IMR-90 (cell line): ENCODE measurements at regions of chr20 and their contacts with region 1.

Region 1: DNA sequence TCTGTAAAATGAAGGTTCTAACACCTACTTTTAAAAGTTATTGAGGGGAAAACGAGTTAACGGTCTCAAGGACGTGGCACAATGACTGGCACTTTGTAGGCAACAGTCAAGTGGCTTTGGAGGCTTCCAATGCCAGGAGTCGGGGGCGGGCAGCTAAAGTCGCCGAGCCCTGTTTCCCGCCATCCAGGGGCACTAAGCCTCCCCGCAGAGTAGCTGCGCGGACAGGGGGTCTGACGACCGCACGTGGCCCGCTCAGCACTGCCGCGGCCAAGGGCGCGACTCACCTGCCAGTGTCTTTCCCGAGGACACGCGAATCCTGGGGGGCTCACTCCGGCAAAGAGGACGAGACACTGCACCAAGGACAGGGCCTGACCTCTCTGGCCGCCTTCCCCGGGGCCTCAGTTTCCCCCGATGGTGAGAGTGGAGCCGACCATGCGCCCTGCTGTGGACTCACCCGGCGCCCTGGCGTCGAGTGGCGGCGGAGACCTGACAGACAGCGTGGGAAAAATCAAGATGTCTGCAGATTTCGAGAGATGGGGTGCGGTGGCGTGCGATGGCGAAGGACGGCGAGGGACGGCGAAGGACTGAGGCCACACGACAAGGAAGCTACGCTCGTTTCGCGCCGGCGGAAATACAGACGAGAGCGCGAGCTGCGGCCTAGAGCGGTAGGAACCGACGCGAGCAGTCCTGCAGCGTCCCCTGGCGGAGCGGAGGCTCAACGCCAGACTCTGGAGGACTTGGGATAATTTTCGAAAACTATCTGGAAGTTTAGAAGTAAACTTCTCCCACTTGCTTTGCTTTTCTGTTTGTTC is at the start of gene SNHG17:
- DNase-seq: peak; percentile 96
- ATAC-seq: peak; percentile 84
- H3K4me3 ChIP-seq: peak within 1 kb of the TSS; percentile 63
- H3K27ac ChIP-seq: peak within 1 kb of the TSS; percentile 36
- H3K4me1 ChIP-seq: peaks cover 7% of the 10 kb centered on the region
- H3K27me3 ChIP-seq: no peaks in the 10 kb centered on the region; the same call in 1 of the 2 replicates
- CTCF ChIP-seq: peak; percentile 99
- POLR2A ChIP-seq: peak; percentile 96
- RAD21 ChIP-seq: peak; percentile 38
- total RNA-seq, gene SNHG17: 5.4 and 6.4 TPM in 2 replicates

Region 2: GRCh38 chr20:38446441-38447209 is 11.7 kb after region 1 on chr20:
- CTCF ChIA-PET with region 1: interaction called, 12 read pairs
- POLR2A ChIA-PET with region 1: interaction called, 10 read pairs
- dilution Hi-C with region 1: no loop called
- in situ Hi-C with region 1: no loop called
- intact Hi-C with region 1: loop called (anchors 1 kb)
- DNase-seq: peak; percentile 94
- ATAC-seq: peak; percentile 98
- H3K4me3 ChIP-seq: peak overlapping the region; percentile 76
- H3K27ac ChIP-seq: peak overlapping the region; percentile 63
- H3K4me1 ChIP-seq: peaks cover 6% of the 10 kb centered on the region; the same call in 1 of the 2 replicates
- H3K27me3 ChIP-seq: no peaks in the 10 kb centered on the region
- CTCF ChIP-seq: peak; percentile 97
- POLR2A ChIP-seq: peak; percentile 90
- RAD21 ChIP-seq: peak; percentile 46

Region 3: GRCh38 chr20:38514185-38514584 is 79.2 kb after region 1 on chr20:
- CTCF ChIA-PET with region 1: no interaction called
- POLR2A ChIA-PET with region 1: no interaction called
- dilution Hi-C with region 1: no loop called
- in situ Hi-C with region 1: no loop called
- intact Hi-C with region 1: no loop called
- DNase-seq: no peak
- ATAC-seq: no peak
- H3K4me3 ChIP-seq: no peak overlapping the region
- H3K27ac ChIP-seq: no peak overlapping the region
- H3K4me1 ChIP-seq: no peaks in the 10 kb centered on the region
- H3K27me3 ChIP-seq: no peaks in the 10 kb centered on the region
- CTCF ChIP-seq: no peak
- POLR2A ChIP-seq: no peak
- RAD21 ChIP-seq: no peak